OCI-LY7 (cell line): ENCODE measurements at regions of chr5 and their contacts with region 1.

Region 1: GRCh38 chr5:35876921-35877320 is 20.2 kb downstream of the IL7R start:
- DNase-seq: no peak
- H3K4me3 ChIP-seq: no peak overlapping the region
- H3K27ac ChIP-seq: no peak overlapping the region
- H3K4me1 ChIP-seq: peaks cover 42% of the 10 kb centered on the region
- CTCF ChIP-seq: no peak

Region 2: GRCh38 chr5:35813521-35813920 is 63.4 kb before region 1 on chr5:
- CTCF ChIA-PET with region 1: no interaction called
- POLR2A ChIA-PET with region 1: interaction called, 3 read pairs
- intact Hi-C with region 1: loop called (anchors 2 kb)
- DNase-seq: no peak
- H3K4me3 ChIP-seq: no peak overlapping the region
- H3K27ac ChIP-seq: no peak overlapping the region
- H3K4me1 ChIP-seq: peaks cover 6% of the 10 kb centered on the region
- CTCF ChIP-seq: no peak